Activated CD4-positive, alpha-beta memory T cell treated with anti-CD3 and anti-CD28 coated beads, Interleukin-2, amount 10 ng/mL, durations not matched to agents 7 days and 5 days (primary cell): ENCODE measurements at regions of chr4 and their contacts with region 1.

Region 1: GRCh38 chr4:153083447-153083947 is 120.7 kb upstream of the TRIM2 start:
- DNase-seq: peak; percentile 39
- H3K4me3 Mint-ChIP-seq: no peak overlapping the region
- H3K27ac Mint-ChIP-seq: no peak overlapping the region
- H3K4me1 Mint-ChIP-seq: peaks cover 22% of the 10 kb centered on the region
- H3K27me3 Mint-ChIP-seq: peaks cover 50% of the 10 kb centered on the region

Region 2: DNA sequence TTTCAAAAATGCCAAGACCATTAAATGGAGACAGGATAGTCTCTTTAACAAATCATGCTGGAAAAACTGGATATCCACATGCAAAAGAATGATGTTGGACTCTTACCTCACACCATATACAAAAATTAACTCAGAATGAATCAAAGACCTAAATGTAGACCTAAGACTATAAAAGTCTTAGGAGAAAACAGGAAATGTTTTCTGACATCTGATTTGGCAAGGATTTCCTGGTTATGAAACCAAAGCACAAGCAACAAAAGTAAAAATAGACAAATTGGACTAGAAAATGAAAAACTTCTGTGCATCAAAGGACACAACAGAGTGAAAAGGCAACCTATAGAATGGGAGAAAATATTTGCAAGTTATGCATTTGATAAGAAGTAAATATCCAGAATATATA is 266.2 kb before region 1 on chr4:
- CTCF ChIA-PET with region 1: no interaction called
- POLR2A ChIA-PET with region 1: no interaction called
- DNase-seq: no peak
- H3K4me3 Mint-ChIP-seq: no peak overlapping the region
- H3K27ac Mint-ChIP-seq: no peak overlapping the region
- H3K4me1 Mint-ChIP-seq: peaks cover 11% of the 10 kb centered on the region
- H3K27me3 Mint-ChIP-seq: no peaks in the 10 kb centered on the region

Region 3: DNA sequence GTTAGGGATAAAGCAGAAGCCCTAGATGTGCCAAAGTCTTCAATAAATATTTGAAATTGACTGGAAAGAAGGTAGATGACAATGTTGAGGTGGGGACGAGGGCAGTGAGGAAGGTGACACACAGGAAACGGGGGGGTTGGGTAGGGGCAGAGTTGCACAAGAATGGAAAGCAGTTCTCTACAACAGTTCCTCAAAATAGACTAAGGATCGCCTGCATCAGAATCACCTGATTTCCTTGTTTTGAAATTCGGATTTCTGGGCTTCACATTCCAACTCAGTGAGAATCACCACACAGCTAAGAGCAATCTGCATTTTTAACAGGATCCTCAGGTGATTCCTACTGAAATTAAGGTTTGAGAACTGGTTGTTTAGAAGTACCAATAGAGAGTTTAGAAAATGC is 233.1 kb before region 1 on chr4:
- CTCF ChIA-PET with region 1: interaction called, 51 read pairs
- POLR2A ChIA-PET with region 1: no interaction called
- DNase-seq: peak; percentile 34
- H3K4me3 Mint-ChIP-seq: no peak overlapping the region
- H3K27ac Mint-ChIP-seq: no peak overlapping the region
- H3K4me1 Mint-ChIP-seq: peaks cover 15% of the 10 kb centered on the region
- H3K27me3 Mint-ChIP-seq: no peaks in the 10 kb centered on the region

Region 4: DNA sequence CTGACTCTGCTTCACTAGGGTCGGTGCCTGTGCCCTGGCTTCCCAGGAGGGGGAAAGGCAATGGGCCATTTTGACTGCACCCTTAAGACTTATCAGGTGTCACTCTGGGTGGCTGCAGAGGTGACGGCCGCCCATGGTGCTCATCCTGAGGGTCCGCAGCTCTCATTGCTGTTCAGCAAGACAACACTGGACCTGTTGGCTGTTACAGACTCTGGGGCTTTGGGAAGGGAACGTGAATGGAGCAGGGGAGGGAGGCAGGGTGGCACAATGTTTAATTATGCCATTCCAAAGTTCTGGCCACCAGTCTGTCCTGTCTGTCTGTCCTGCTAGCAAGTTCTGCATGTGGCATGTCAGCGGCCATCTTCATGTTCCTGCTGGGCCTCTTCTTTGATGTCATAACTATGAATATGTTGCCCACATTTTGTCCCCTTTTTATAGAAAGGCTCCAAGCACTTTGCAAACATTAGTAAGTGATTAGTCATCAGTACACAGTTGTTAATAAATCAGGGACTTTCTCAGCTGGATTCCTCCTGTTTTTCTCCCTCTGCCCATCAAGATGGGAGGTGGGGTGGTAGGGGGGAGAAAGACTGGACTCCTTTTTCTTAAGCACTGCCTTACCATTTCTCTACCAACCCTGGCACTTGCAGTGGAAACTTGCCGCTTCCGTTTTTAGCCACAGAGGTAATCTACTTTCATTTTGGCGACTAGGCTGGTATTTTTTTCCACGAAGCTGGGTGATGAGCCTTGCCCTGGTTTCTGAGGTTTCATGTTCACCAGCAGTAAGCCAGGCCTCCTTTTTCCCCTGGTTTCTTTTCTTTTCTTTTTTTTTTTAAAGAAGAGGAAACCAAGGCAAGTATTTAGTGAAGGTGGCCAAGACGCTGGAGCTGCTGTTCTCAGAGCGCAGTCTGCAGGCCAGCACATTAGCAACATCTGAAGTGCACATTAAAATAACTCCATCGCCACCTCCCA is 32.1 kb after region 1 on chr4:
- CTCF ChIA-PET with region 1: interaction called, 11 read pairs
- POLR2A ChIA-PET with region 1: no interaction called
- DNase-seq: peak; percentile 82
- H3K4me3 Mint-ChIP-seq: peak overlapping the region; percentile 6
- H3K27ac Mint-ChIP-seq: peak overlapping the region; percentile 62
- H3K4me1 Mint-ChIP-seq: peaks cover 3% of the 10 kb centered on the region
- H3K27me3 Mint-ChIP-seq: peaks cover 44% of the 10 kb centered on the region